Naive thymus-derived CD8-positive, alpha-beta T cell (primary cell): ENCODE measurements at regions of chr11 and their contacts with region 1.

Region 1: DNA sequence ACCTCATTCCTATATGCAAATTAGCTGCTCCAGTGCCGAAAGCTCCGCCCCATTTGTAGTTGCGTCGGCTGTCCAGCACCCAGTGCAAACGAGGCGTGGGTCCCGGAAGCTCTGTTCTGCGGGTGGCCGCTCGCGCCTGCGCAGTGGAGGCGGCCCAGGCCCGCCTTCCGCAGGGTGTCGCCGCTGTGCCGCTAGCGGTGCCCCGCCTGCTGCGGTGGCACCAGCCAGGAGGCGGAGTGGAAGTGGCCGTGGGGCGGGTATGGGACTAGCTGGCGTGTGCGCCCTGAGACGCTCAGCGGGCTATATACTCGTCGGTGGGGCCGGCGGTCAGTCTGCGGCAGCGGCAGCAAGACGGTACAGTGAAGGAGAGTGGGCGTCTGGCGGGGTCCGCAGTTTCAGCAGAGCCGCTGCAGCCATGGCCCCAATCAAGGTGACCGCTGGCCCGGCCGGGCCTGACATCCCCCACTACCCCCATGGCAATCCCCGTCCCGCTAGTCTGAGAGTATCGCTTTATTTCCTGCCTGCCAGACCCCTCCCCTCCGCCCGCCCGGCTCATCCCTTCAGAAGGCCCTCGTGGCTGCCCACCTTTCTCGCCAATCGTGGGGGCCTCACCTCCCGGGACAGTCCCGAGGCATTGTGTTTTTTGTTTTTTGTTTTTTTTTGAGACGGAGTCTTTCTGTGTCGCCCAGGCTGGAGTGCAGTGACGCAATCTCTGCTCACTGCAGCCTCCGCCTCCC is at the start of gene PRDX5:
- DNase-seq: peak in 9 of 10 donors; percentile 91 to 97 (median 95)
- ATAC-seq: peak; percentile 77 to 82
- H3K4me3 Mint-ChIP-seq: peak within 1 kb of the TSS; percentile 90 to 97 (median 94)
- H3K27ac Mint-ChIP-seq: peak within 1 kb of the TSS; percentile 97 to 100 (median 99)
- H3K4me1 Mint-ChIP-seq: peaks cover 22 to 45% (median 40%) of the 10 kb centered on the region in 4 donors
- H3K27me3 Mint-ChIP-seq: no peaks in the 10 kb centered on the region
- polyA plus RNA-seq, gene PRDX5: 186 to 239 (median 206) TPM

Region 2: GRCh38 chr11:64185816-64186498 is 132.2 kb before region 1 on chr11 and contains the start of gene STIP1:
- POLR2A ChIA-PET with region 1: interaction called, 15 read pairs
- DNase-seq: peak; percentile 93 to 100 (median 99)
- ATAC-seq: peak; percentile 90 to 91
- H3K4me3 Mint-ChIP-seq: peak within 1 kb of the TSS in 8 of 10 donors; percentile 96 to 100 (median 98)
- H3K27ac Mint-ChIP-seq: peak within 1 kb of the TSS; percentile 91 to 99 (median 96)
- H3K4me1 Mint-ChIP-seq: peaks cover 23 to 55% (median 47%) of the 10 kb centered on the region in 4 donors
- H3K27me3 Mint-ChIP-seq: peaks cover 0 to 2% (median 0%) of the 10 kb centered on the region in 5 donors
- polyA plus RNA-seq, gene STIP1: 59.4 to 132 (median 66.2) TPM

Region 3: GRCh38 chr11:64240394-64241174 is 77.5 kb before region 1 on chr11 and contains the start of gene FKBP2:
- POLR2A ChIA-PET with region 1: interaction called, 24 read pairs
- DNase-seq: peak; percentile 96 to 99 (median 98)
- ATAC-seq: peak; percentile 73 to 75
- H3K4me3 Mint-ChIP-seq: peak within 1 kb of the TSS; percentile 86 to 96 (median 93)
- H3K27ac Mint-ChIP-seq: peak within 1 kb of the TSS; percentile 96 to 100 (median 99)
- H3K4me1 Mint-ChIP-seq: peaks cover 12 to 47% (median 40%) of the 10 kb centered on the region in 4 donors
- H3K27me3 Mint-ChIP-seq: no peaks in the 10 kb centered on the region
- polyA plus RNA-seq, gene FKBP2: 84.9 to 91.8 (median 85.5) TPM

Region 4: DNA sequence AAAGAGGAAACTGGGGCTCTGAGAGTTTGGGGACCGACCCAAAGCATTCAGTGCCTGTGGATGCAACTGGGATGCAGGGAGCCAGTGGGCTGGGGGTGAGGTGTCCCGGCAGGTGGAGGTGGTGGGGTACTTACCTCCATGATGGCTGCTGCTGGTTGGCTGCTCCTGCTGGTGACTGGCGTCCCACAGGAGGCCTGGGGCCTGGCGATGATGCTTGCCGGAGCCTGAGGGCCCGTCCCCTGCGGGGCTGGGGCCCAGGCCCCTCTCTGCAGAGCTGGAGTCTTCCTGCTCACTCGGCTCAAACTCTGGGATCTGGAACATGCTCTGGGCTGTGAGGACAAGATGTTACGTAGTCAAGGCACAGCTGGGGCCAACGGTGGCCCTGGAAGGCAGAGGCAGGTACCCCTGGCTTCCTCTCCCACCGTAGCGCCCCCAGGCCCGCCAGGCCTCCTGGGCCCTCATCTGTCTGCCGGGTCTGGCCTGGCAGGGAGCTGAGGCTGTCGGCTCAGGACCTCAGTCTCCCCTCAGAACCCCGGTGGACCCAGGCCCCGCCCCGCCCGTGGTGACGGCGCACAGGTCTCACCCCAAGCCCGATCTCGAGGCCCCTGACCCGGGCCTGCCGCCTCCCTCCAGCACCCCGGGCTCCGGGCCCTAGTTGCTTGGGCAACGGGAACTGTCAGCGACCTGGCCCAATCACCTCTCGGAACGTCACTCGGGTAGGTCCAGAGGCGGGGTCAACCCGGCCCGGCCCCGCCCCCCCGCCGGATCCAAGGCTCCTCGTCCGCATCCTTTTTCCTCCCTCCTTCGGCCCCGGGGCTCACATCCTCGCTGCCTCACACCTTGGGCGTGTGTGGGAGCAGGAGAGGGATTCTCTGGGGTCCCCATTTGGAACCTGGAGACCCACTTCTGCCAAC is 33.8 kb before region 1 on chr11 and contains the start of gene BAD:
- POLR2A ChIA-PET with region 1: interaction called, 16 read pairs
- DNase-seq: peak; percentile 86 to 96 (median 88)
- ATAC-seq: peak; percentile 78 to 79
- H3K4me3 Mint-ChIP-seq: peak within 1 kb of the TSS; percentile 85 to 94 (median 90)
- H3K27ac Mint-ChIP-seq: peak within 1 kb of the TSS; percentile 74 to 99 (median 97)
- H3K4me1 Mint-ChIP-seq: peaks cover 8 to 29% (median 21%) of the 10 kb centered on the region in 4 donors
- H3K27me3 Mint-ChIP-seq: no peaks in the 10 kb centered on the region
- polyA plus RNA-seq, gene BAD: 39.1 to 44.8 (median 39.9) TPM

Region 5: DNA sequence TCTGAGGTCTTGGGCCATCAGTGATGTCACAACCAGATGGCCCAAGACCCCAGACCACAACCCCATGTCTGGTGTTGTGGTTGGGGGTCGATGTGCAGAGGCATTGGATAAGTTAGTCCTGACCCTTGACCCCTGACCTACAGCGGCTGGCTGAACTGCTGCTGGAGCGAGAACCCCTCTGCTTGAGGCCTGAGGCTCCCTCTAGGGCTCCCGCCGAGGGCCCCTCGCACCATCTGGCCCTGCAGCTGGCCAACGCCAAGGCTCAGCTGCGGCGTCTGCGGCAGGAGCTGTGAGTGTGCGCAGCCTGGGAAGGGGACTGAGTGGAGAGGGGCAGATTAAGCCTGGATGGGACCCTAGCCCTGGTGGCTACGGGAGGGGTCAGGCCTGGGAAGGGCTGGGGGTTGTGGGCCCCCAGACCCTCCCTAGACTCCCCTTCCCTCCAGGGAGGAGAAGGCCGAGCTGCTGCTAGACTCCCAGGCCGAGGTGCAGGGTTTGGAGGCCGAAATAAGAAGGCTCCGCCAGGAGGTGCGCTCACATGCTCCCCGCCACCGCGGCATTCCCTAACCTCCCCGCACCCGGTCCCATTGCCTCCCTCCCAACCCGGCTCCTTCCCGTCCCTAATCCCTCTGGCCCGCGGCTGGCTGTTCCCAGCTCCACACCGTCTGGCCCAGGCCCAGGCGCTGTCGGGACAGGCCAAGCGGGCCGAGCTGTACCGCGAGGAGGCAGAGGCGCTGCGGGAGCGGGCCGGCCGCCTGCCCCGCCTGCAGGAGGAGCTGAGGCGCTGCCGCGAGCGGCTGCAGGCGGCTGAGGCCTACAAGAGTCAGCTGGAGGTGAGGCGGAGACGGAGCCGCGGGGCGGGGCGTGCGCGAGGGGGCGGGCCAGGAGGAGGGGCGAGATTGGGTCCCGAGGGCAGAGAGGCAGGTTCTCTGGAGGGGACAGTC is 24.0 kb after region 1 on chr11:
- POLR2A ChIA-PET with region 1: interaction called, 73 read pairs
- DNase-seq: peak; percentile 76 to 88 (median 85)
- ATAC-seq: peak; percentile 51 to 54
- H3K4me3 Mint-ChIP-seq: peak overlapping the region in 9 of 10 donors; percentile 32 to 92 (median 85)
- H3K27ac Mint-ChIP-seq: peak overlapping the region in 5 of 10 donors; percentile 29 to 75 (median 52)
- H3K4me1 Mint-ChIP-seq: peaks cover 23 to 60% (median 50%) of the 10 kb centered on the region in 4 donors
- H3K27me3 Mint-ChIP-seq: no peaks in the 10 kb centered on the region

Region 6: DNA sequence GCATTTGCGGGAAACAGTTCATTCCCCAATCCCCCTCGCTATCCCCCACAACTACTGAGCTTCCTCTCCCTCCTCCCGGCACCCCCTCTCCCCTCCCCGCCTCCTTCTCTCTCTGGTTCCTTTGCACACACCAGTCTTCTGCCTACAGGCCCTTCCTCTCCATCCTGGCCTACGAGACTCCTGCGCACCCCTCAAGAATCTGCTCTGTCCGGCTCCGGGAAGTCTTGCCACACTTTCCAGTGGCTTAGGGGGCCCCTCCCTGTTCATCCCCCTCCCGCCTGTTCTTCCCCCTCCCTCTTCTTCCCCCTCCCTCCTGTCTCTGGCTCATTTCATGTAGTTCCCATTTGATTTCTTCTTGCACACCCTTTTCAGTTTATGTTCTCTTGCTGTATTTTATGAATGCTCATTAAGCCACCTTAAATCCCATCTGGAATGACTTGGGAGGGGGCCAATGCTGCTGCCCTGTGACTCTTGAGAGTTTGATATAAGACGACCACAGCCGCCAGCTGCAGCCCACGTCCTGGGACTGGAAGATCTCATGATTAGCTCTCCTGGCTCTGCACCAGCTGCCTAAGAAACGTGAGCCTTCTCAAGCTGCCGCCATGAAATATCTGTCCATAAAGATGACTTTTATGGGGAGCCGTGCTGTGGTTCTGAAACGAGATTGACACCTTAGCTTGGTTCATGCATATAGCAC is 91.7 kb after region 1 on chr11:
- POLR2A ChIA-PET with region 1: no interaction called
- DNase-seq: no peak
- ATAC-seq: no peak
- H3K4me3 Mint-ChIP-seq: no peak overlapping the region
- H3K27ac Mint-ChIP-seq: no peak overlapping the region
- H3K4me1 Mint-ChIP-seq: peaks cover 0 to 4% (median 2%) of the 10 kb centered on the region in 4 donors
- H3K27me3 Mint-ChIP-seq: peaks cover 0 to 13% (median 2%) of the 10 kb centered on the region in 5 donors

Region 7: DNA sequence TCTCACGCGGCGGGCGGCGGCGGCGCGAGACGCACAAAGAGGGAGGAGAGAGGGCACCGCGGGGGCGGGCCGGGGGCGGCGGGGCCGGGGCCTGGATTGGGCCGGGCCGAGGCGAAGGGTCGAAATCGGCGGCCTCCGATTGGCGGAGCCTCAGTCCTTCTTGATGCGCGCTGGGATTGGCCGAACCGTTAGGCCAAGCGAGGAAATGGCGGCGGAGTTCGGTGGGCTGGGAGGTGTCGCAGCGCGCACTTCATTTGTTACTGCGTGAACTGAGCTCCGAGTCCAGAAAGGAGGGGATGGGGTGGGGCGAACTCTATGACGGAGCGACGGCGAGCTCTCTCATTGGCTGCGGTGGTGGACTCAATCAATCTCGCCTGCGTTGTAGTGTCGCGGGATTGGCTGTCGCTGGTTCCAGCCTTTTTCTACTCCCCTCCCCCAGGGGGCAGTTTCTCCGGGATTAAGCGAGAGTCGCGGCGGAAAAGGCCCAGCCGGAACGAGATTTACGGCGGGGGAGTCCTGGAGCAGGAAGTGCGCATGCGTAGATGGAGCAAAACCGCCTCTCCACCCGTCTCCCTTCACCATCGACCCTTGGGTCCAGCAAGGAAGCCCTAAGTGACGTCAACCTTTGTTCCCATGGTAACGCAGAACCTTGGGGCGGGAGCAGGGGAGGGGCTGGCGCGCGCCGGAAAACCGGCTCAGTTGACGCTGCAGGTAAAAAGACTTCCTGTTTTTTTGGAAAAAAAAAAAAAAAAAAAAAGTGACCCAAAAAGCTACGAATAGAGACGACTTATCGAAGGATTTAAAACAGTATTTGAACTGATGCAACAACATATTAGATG is 460.6 kb after region 1 on chr11 and contains the start of gene SF1:
- POLR2A ChIA-PET with region 1: interaction called, 12 read pairs
- DNase-seq: peak; percentile 94 to 100 (median 100)
- ATAC-seq: peak; percentile 79 to 84
- H3K4me3 Mint-ChIP-seq: peak within 1 kb of the TSS; percentile 90 to 97 (median 94)
- H3K27ac Mint-ChIP-seq: peak within 1 kb of the TSS; percentile 98 to 100 (median 100)
- H3K4me1 Mint-ChIP-seq: peaks cover 20 to 68% (median 60%) of the 10 kb centered on the region in 4 donors
- H3K27me3 Mint-ChIP-seq: peaks cover 0 to 5% (median 0%) of the 10 kb centered on the region in 5 donors
- polyA plus RNA-seq, gene SF1: 87.0 to 138 (median 96.6) TPM